PC-3 (cell line): ENCODE measurements at regions of chr5 and their contacts with region 1.

Region 1: GRCh38 chr5:37668524-37669047 is 171.3 kb downstream of the GDNF start:
- DNase-seq: peak; percentile 99
- ATAC-seq: peak; percentile 100
- H3K4me3 ChIP-seq: 0 out of 2 replicates have a peak overlapping the region, but pooled peaks have one; percentile 7
- H3K27ac ChIP-seq: peak overlapping the region; percentile 75
- H3K4me1 ChIP-seq: peaks cover 29% of the 10 kb centered on the region
- H3K27me3 ChIP-seq: no peaks in the 10 kb centered on the region
- CTCF ChIP-seq: no peak

Region 2: DNA sequence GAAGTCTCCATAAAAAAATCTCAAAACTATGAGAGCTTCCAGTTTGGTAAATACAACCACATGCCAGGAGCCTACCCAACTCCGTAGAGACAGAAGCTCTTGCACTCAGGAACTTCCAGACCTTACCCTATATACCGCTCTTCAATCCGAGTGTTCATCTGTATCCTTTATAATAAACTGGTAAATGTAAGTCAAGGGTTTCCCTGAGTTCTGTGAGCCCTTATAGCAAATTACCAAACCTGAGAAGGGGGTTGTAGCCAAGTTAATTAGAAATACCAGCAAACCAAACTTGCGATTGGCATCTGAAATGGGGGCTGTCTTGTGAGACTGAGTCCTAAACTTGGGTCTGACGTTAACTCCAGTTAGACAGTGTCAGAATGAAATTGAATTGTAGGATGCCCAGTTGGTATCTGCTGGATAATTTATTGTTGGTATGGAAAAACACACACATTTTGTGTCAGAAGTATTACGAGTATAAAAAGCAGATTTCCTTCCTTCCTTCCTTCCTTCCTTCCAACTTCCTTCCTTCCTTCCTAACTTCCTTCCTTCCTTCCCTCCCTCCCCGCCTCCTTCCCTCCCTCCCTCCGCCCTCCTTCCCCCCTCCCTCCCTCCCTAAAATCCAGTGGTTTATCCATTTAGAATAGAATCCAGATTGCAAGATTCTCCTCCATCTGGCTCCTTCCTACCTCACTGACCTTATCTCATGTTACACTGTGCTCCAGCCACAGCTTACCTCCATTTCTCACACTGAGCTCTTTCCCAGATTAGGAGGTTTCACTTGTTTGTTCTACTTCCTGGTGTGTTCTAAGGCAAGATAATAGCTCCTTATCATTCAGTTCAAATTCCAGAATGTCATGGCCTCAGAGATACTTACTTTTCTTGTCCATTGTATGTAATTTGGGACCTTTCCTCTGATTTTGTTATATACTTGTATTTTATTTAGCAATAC is 92.8 kb before region 1 on chr5:
- CTCF ChIA-PET with region 1: no interaction called
- POLR2A ChIA-PET with region 1: no interaction called
- intact Hi-C with region 1: no loop called
- DNase-seq: no peak
- ATAC-seq: no peak
- H3K4me3 ChIP-seq: no peak overlapping the region
- H3K27ac ChIP-seq: no peak overlapping the region
- H3K4me1 ChIP-seq: no peaks in the 10 kb centered on the region
- H3K27me3 ChIP-seq: no peaks in the 10 kb centered on the region
- CTCF ChIP-seq: no peak

Region 3: DNA sequence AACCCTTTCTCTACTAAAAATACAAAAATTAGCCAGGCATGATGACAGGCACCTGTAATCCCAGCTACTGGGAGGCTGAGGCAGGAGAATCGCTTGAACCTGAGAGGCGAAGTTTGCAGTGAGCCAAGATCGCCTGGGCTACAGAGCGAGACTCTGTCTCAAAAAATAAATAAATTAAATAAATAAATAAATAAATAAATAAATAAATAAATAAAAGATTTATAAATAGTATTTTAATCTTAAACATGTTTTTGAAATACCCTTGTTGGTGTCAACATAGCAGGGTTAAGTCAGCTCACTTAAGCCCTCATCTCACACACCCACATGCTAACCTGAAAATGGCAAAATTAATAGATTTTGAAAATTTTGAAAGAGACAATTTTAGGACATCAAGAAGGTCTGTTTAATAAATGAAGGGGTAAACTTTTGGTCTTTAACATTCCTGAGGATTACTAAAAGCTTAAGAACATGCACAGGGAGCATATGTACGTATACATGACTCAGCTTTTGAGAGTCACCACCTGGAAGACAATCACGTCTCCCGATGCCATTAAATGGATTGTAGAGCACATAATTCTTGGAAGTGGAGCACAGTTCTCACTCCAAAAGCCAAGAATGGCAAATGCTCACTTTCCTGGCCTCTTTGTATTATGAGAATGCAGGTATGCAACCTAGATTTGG is 31.3 kb before region 1 on chr5:
- CTCF ChIA-PET with region 1: no interaction called
- POLR2A ChIA-PET with region 1: no interaction called
- intact Hi-C with region 1: loop called (anchors 1 kb)
- DNase-seq: peak; percentile 88
- ATAC-seq: peak; percentile 80
- H3K4me3 ChIP-seq: no peak overlapping the region
- H3K27ac ChIP-seq: peak overlapping the region; percentile 35
- H3K4me1 ChIP-seq: peaks cover 45% of the 10 kb centered on the region
- H3K27me3 ChIP-seq: no peaks in the 10 kb centered on the region
- CTCF ChIP-seq: no peak

Region 4: GRCh38 chr5:37696190-37697021 is 27.8 kb after region 1 on chr5:
- CTCF ChIA-PET with region 1: no interaction called
- POLR2A ChIA-PET with region 1: no interaction called
- intact Hi-C with region 1: loop called (anchors 2 kb)
- DNase-seq: peak; percentile 82
- ATAC-seq: peak; percentile 94
- H3K4me3 ChIP-seq: peak overlapping the region; percentile 30; the same call in 1 of the 2 replicates
- H3K27ac ChIP-seq: peak overlapping the region; percentile 78
- H3K4me1 ChIP-seq: peaks cover 23% of the 10 kb centered on the region
- H3K27me3 ChIP-seq: no peaks in the 10 kb centered on the region
- CTCF ChIP-seq: no peak